Left ventricle myocardium superior (tissue), 1 donor: ENCODE measurements at regions of chr1 and their contacts with region 1.

Region 1: GRCh38 chr1:27102707-27103491 is 52.0 kb downstream of the SLC9A1 start:
- DNase-seq: peak; percentile 87
- ATAC-seq: peak; percentile 49

Region 2: DNA sequence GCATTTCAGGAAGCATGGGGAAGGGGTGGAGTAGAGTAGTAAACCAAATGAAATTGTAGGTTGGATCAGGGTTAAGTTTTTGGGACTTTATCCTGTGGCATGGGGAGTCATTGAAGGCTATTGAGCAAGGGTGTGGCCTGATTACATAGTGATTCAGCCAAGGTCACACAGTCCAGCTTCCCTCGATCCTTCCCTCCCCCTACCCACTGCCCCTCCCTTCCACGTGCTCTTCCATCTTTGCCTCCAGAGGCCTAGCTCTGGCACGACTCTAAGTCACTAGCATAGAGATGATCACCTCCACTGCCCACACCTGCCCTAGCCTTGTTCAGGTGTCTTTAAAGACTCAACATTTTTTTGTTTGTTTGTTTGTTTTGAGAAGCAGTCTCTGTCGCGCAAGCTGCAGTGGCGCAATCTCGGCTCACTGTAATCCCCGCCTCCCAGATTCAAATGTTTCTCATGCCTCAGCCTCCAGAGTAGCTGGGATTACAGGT is 89.2 kb after region 1 on chr1:
- intact Hi-C with region 1: loop called (anchors 5 kb)
- DNase-seq: no peak
- ATAC-seq: no peak

Region 3: DNA sequence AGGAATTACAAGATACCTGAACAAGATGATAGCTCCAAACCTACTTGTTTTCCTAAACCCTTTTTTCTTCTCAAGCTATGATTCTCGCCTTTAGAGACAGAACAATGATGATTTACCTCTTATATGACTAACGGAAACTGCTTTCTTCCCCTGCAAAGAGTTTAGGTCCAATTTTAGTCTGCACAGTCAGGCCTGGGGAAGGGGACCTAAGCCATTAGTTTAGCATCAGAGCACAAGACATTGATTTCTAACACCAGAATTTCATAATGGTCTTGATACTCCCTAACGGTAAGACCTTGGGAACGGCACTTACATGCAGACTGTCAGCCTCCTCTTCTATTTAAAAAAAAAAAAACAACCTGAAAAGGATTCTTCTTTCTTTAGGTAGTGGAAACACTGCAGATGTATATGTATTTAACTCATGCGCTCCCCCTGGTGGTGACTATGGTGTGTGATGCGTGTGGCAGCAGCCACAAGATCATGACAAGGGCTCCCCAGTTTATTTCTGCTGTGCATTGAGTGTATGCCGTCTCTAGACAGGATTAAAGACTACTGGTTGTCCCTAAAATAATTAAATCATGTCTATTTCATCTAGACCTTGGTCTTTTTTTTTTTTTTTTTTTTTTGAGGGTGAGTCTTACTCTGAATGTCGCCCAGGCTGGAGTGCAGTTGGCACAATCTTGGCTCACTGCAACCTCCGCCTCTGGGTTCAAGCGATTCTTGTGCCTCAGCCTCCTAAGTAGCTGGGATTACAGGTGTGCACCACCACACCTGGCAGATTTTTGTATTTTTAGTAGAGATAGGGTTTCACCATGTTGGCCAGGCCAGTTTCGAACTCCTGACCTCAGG is 181.8 kb after region 1 on chr1:
- intact Hi-C with region 1: loop called (anchors 5 kb)
- DNase-seq: peak; percentile 89
- ATAC-seq: peak; percentile 88